A673 (cell line): ENCODE measurements at regions of chr1 and their contacts with region 1.

Region 1: DNA sequence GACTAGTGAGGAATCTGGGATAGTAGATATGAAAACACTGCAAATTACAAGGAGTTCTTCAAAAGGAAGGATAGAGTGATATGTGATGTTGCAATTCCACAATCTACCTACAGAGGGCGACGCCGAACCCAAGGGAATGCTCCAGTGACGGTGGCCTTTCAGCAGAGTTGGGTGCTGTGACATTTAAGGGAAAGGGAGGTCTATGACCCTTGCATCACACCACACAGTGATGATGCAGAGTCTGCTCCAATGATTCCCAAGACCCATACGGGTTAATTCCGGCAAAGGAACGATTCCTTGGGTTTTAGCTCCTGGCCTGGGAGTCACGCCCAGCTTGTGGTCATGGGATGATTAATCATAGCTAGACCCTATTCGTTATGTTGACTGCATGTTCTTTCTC is 123.0 kb upstream of the IGSF21 start:
- DNase-seq: peak; percentile 53
- H3K4me3 ChIP-seq: no peak overlapping the region
- H3K27ac ChIP-seq: no peak overlapping the region
- H3K4me1 ChIP-seq: no peaks in the 10 kb centered on the region
- H3K27me3 ChIP-seq: no peaks in the 10 kb centered on the region
- CTCF ChIP-seq: peak; percentile 84

Region 2: DNA sequence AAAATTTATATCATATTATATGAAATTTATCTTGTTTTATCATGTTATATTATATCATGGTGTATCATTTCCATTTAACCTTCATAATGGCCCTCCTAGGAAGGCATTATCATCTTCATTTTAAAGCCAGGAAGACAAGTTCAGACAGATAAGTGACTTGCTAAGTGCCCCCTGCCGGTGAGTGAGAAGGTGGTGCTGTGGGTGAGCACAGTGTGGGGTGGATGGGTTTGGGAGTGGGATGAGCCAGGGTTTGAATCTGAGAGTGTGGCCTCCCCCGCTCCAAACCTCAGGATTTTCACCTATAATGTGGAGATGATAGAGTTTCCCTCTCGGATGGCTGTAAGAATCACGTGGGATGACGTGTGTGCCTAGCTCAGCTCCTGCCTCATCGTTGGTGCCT is 14.3 kb after region 1 on chr1:
- CTCF ChIA-PET with region 1: interaction called, 12 read pairs
- POLR2A ChIA-PET with region 1: no interaction called
- intact Hi-C with region 1: no loop called
- DNase-seq: peak; percentile 29
- H3K4me3 ChIP-seq: no peak overlapping the region
- H3K27ac ChIP-seq: no peak overlapping the region
- H3K4me1 ChIP-seq: no peaks in the 10 kb centered on the region
- H3K27me3 ChIP-seq: peaks cover 24% of the 10 kb centered on the region
- CTCF ChIP-seq: peak; percentile 55

Region 3: GRCh38 chr1:18100491-18101063 is 116.0 kb after region 1 on chr1:
- CTCF ChIA-PET with region 1: interaction called, 3 read pairs
- POLR2A ChIA-PET with region 1: no interaction called
- intact Hi-C with region 1: loop called (anchors 2 kb)
- DNase-seq: peak; percentile 75
- H3K4me3 ChIP-seq: no peak overlapping the region
- H3K27ac ChIP-seq: no peak overlapping the region
- H3K4me1 ChIP-seq: no peaks in the 10 kb centered on the region
- H3K27me3 ChIP-seq: no peaks in the 10 kb centered on the region
- CTCF ChIP-seq: peak; percentile 90